ENCODE measurements at regions of chr15 and their contacts with region 1.

Region 1: GRCh38 chr15:97316362-97316761 is 644.1 kb upstream of the ARRDC4 start:
- DNase-seq: peak; percentile 20
- H3K4me3 Mint-ChIP-seq: no peak overlapping the region
- H3K27ac Mint-ChIP-seq: no peak overlapping the region
- H3K4me1 Mint-ChIP-seq: peaks cover 29% of the 10 kb centered on the region
- H3K27me3 Mint-ChIP-seq: no peaks in the 10 kb centered on the region
- CTCF ChIP-seq: no peak

Region 2: GRCh38 chr15:96670389-96670788 is 646.0 kb before region 1 on chr15:
- CTCF ChIA-PET with region 1: no interaction called
- intact Hi-C with region 1: loop called (anchors 10 kb)
- DNase-seq: no peak
- H3K4me3 Mint-ChIP-seq: no peak overlapping the region
- H3K27ac Mint-ChIP-seq: no peak overlapping the region
- H3K4me1 Mint-ChIP-seq: no peaks in the 10 kb centered on the region
- H3K27me3 Mint-ChIP-seq: no peaks in the 10 kb centered on the region
- CTCF ChIP-seq: no peak

Region 3: DNA sequence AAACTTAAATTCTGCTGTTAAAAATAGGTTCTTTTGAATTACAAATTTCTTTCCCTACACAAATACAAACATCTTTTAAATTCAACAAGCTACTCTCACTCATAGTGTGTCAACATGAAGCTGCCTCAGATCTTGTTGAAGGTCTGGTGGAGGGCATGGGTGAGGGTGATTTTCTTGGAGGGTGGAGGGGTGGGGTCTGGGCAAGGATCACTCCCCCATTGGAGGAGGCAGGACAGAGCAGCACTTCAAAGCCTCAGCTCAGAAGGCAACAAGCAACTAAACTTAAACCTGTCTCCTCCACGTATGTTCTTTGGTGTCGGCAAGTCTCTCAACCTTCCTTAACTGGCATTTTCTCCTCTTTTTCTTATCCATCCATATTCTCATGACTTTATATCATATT is 255.0 kb before region 1 on chr15:
- CTCF ChIA-PET with region 1: no interaction called
- intact Hi-C with region 1: no loop called
- DNase-seq: no peak
- H3K4me3 Mint-ChIP-seq: no peak overlapping the region
- H3K27ac Mint-ChIP-seq: no peak overlapping the region
- H3K4me1 Mint-ChIP-seq: no peaks in the 10 kb centered on the region
- H3K27me3 Mint-ChIP-seq: no peaks in the 10 kb centered on the region
- CTCF ChIP-seq: no peak

Region 4: GRCh38 chr15:97126553-97127233 is 189.7 kb before region 1 on chr15:
- CTCF ChIA-PET with region 1: no interaction called
- intact Hi-C with region 1: no loop called
- DNase-seq: no peak
- H3K4me3 Mint-ChIP-seq: no peak overlapping the region
- H3K27ac Mint-ChIP-seq: no peak overlapping the region
- H3K4me1 Mint-ChIP-seq: no peaks in the 10 kb centered on the region
- H3K27me3 Mint-ChIP-seq: no peaks in the 10 kb centered on the region
- CTCF ChIP-seq: no peak

Region 5: DNA sequence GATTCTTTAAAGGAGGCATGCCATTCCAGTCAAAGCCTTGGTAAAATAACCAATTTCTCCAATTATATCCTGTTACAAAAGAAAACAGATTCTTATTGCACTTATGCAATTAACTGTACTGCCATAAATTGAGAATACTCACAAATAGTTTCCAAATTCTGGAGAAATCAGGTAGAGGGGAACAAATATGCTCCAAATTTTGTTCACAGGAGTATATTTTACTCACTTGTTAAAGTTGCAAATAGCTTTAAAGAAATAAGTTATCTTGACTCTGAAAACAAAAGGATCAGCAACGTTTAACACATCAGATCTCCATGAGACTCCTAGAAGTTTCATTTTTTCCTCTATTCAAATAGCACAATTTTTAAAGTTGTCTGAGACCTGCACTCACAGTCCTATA is 68.0 kb before region 1 on chr15:
- CTCF ChIA-PET with region 1: interaction called, 3 read pairs
- intact Hi-C with region 1: loop called (anchors 2 kb)
- DNase-seq: no peak
- H3K4me3 Mint-ChIP-seq: no peak overlapping the region
- H3K27ac Mint-ChIP-seq: no peak overlapping the region
- H3K4me1 Mint-ChIP-seq: peaks cover 11% of the 10 kb centered on the region
- H3K27me3 Mint-ChIP-seq: no peaks in the 10 kb centered on the region
- CTCF ChIP-seq: no peak

Region 6: GRCh38 chr15:97504031-97504792 is 187.8 kb after region 1 on chr15:
- CTCF ChIA-PET with region 1: no interaction called
- intact Hi-C with region 1: loop called (anchors 1 kb)
- DNase-seq: peak; percentile 36
- H3K4me3 Mint-ChIP-seq: no peak overlapping the region
- H3K27ac Mint-ChIP-seq: peak overlapping the region; percentile 81
- H3K4me1 Mint-ChIP-seq: peaks cover 38% of the 10 kb centered on the region
- H3K27me3 Mint-ChIP-seq: no peaks in the 10 kb centered on the region
- CTCF ChIP-seq: no peak